Uterus (tissue), 4 donors: ENCODE measurements at regions of chr20 and their contacts with region 1.

Region 1: DNA sequence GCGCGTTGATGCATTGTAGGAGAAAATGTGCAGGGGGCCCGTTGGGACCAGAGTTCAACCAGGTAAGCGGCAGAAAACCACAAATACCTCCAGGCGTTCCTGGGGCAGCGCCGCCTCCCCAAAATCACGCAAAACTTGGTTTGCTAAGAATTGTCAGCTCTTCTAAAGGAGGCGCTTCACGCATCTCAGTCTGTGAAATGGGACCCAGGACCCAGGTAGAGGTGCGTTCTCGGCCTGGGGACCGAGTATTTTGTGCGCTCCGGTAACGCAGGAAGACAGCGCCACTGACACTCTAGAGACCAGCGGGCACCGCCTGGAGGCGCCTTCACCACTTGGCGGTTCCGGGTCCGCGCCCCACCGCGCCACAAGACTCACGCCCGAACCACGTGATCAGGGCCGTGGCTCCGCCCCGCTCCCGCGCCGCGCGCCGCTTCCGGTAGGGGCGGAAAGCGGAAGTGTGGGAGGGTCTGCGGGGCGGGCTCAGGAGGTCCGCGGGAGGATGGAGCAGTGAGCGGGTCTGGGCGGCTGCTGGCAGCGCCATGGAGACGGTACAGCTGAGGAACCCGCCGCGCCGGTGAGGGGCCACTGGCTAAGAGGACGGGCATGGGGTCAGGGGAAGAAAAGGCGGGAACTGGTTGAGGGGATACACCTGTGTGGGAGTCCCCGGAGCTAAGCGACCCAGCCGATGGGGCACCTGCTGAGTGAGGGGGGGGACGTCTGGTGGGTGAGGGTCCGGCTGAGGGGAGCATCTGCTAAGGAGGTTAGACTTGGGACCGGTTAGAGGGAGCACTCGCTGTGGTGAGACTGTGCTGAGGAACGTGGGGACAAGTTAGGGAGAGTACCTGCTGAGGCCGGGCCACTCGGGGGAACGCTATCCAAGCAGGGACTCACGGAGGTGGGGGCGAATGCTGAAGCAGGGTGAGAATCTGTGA is at the start of gene STK4:
- DNase-seq: peak; percentile 90 to 93
- H3K4me3 ChIP-seq: peak within 1 kb of the TSS; percentile 64 to 71
- H3K27ac ChIP-seq: peak within 1 kb of the TSS; percentile 83 to 89
- H3K4me1 ChIP-seq: no peaks in the 10 kb centered on the region
- H3K27me3 ChIP-seq: no peaks in the 10 kb centered on the region
- CTCF ChIP-seq: peak; percentile 58 to 71 (median 65)
- POLR2A ChIP-seq: peak; percentile 71 to 87
- total RNA-seq, gene STK4: 9.0 to 43.6 (median 29.6) TPM

Region 2: GRCh38 chr20:44849703-44850102 is 116.6 kb before region 1 on chr20:
- intact Hi-C with region 1: no loop called
- DNase-seq: no peak
- H3K4me3 ChIP-seq: no peak overlapping the region
- H3K27ac ChIP-seq: no peak overlapping the region
- H3K4me1 ChIP-seq: no peaks in the 10 kb centered on the region
- H3K27me3 ChIP-seq: no peaks in the 10 kb centered on the region
- CTCF ChIP-seq: no peak
- POLR2A ChIP-seq: no peak

Region 3: GRCh38 chr20:44885392-44886265 is 80.7 kb before region 1 on chr20 and contains the start of gene YWHAB:
- intact Hi-C with region 1: loop called (anchors 10 kb)
- DNase-seq: peak; percentile 98 to 99
- H3K4me3 ChIP-seq: peak within 1 kb of the TSS; percentile 94 to 99
- H3K27ac ChIP-seq: peak within 1 kb of the TSS; percentile 93 to 97
- H3K4me1 ChIP-seq: peaks cover 0 to 9% of the 10 kb centered on the region in 2 donors
- H3K27me3 ChIP-seq: no peaks in the 10 kb centered on the region
- CTCF ChIP-seq: peak in 2 of 4 experiments; percentile 10 to 14
- POLR2A ChIP-seq: peak; percentile 45 to 79
- total RNA-seq, gene YWHAB: 54.3 to 131 (median 108) TPM